Activated CD8-positive, alpha-beta T cell treated with anti-CD3 and anti-CD28 coated beads for 36 hours (primary cell): ENCODE measurements at regions of chr7 and their contacts with region 1.

Region 1: DNA sequence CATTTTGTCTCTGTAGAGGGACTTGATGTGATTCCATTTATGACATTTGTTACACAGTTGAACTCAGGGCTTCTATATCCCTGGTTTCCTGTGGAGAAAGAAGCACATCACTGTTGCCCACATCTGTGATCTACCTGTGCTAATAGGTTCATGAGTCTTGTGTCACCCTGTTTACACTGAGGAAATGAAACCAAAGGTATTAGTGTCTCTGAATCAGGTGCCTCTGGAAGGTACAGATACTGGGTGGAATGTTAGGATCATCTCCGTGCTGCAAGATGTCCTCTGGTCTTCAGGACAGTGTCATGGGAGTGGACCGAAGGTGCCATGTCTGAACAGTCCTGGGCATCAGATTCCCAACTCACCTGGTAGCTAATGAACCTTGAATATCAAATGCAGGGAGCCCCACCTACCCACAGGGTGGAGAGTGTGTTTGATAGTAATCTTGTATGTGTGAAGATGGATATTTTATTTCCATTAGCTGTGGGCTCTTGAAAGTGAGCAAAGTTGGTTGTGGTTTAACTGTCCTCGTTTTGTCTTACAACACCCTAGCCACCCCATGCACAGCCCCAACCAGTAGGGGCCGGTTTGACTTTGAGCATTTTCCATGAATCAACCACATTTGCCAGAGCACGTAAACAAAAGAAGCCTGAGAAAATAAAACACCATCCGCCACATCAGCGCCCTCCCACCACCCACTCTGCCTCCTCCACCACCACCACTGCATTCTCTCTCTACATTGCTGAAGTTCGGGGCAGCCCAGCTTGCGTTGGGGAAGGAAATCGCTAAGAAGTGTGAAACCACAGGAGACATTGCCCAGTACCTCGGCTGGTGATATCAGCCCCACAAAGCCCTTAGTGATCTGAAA is 40.7 kb downstream of the TARP start:
- DNase-seq: peak; percentile 94
- ATAC-seq: peak; percentile 89
- H3K4me3 Mint-ChIP-seq: peak overlapping the region; percentile 43
- H3K27ac Mint-ChIP-seq: peak overlapping the region; percentile 90
- H3K4me1 Mint-ChIP-seq: peaks cover 77% of the 10 kb centered on the region
- H3K27me3 Mint-ChIP-seq: no peaks in the 10 kb centered on the region
- CTCF ChIP-seq: no peak

Region 2: DNA sequence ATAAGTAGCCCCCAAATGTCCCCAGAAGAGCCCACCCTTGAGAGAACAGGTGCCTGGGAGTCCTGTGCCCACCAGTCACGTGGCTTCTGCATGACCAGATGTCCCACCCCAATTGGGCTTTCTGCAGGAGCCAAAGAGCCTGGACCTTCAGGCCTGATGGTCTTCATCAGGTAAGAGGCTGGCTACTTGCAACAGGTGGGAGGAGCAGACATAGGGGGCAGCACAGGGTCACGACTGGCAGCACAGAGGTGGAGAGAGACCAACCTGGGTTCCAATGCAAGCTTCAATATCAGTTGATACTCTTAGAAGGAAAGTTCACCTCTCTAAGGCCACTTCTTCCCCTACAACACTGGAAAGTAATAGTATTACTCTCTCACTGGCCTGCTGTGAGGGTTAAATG is 1072.1 kb before region 1 on chr7:
- CTCF ChIA-PET with region 1: no interaction called
- POLR2A ChIA-PET with region 1: no interaction called
- intact Hi-C with region 1: no loop called
- DNase-seq: no peak
- ATAC-seq: no peak
- H3K4me3 Mint-ChIP-seq: no peak overlapping the region
- H3K27ac Mint-ChIP-seq: no peak overlapping the region
- H3K4me1 Mint-ChIP-seq: peaks cover 7% of the 10 kb centered on the region
- H3K27me3 Mint-ChIP-seq: no peaks in the 10 kb centered on the region
- CTCF ChIP-seq: no peak

Region 3: DNA sequence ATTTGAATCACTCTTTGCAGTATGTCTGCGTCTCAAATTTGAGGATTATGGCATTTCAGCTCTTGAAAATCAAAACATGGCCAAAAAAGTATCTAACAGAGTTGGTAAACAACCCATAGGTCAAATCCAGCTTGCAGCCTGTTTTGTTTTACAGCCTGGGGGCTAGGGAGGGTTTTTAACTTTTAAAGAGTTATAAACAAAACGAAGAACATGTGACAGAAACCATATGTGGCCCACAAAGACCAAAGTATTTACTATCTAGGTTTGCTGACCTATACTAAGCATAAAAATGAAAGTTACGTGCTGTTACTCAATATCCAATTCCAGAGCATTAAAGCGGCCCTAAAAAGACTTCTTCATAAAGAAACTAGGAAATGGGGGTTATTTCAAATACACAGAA is 110.2 kb before region 1 on chr7:
- CTCF ChIA-PET with region 1: no interaction called
- POLR2A ChIA-PET with region 1: no interaction called
- intact Hi-C with region 1: no loop called
- DNase-seq: no peak
- ATAC-seq: no peak
- H3K4me3 Mint-ChIP-seq: no peak overlapping the region
- H3K27ac Mint-ChIP-seq: no peak overlapping the region
- H3K4me1 Mint-ChIP-seq: peaks cover 7% of the 10 kb centered on the region
- H3K27me3 Mint-ChIP-seq: peaks cover 6% of the 10 kb centered on the region
- CTCF ChIP-seq: no peak

Region 4: GRCh38 chr7:38318803-38319416 is 86.2 kb after region 1 on chr7:
- CTCF ChIA-PET with region 1: interaction called, 10 read pairs
- POLR2A ChIA-PET with region 1: interaction called, 3 read pairs
- intact Hi-C with region 1: loop called (anchors 5 kb)
- DNase-seq: peak; percentile 46
- ATAC-seq: peak; percentile 66
- H3K4me3 Mint-ChIP-seq: peak overlapping the region; percentile 66
- H3K27ac Mint-ChIP-seq: peak overlapping the region; percentile 86
- H3K4me1 Mint-ChIP-seq: peaks cover 58% of the 10 kb centered on the region
- H3K27me3 Mint-ChIP-seq: no peaks in the 10 kb centered on the region
- CTCF ChIP-seq: peak; percentile 49